ENCODE measurements at regions of chr3 and their contacts with region 1.

Region 1: DNA sequence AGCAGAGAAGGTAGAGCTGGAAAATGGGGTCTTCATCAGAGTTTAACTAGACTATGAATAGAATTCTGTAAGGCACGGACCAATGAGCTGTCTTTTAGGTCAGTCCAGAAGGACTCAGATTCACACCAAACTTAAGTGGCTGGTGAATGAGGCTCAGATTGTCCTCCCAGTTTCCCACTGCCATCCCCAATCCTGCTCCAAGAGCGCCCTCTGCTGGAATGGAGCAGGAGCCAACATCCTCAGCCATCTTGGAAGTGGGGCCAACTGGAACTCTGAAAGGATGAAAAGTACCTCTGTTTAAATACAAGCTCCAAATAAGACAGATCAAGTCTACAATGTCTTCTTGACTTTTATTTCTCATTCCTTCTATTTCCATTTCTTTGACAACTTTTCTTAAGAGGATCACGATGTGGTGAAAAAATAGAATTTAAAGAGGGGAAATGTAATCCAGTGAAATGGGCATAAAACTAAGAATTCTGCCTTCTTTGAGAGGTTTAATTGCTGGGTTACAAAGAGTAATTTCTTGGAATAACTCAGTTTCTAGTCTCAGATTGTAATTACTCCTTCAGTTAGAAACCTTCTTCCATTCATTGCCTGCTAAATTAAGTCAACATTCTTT is 217.1 kb upstream of the TPRG1 start:
- DNase-seq: peak; percentile 84
- H3K4me3 ChIP-seq: no peak overlapping the region
- H3K27ac ChIP-seq: no peak overlapping the region
- H3K4me1 ChIP-seq: peaks cover 21% of the 10 kb centered on the region
- H3K27me3 ChIP-seq: no peaks in the 10 kb centered on the region
- CTCF ChIP-seq: peak; percentile 84 to 95
- POLR2A ChIP-seq: no peak

Region 2: DNA sequence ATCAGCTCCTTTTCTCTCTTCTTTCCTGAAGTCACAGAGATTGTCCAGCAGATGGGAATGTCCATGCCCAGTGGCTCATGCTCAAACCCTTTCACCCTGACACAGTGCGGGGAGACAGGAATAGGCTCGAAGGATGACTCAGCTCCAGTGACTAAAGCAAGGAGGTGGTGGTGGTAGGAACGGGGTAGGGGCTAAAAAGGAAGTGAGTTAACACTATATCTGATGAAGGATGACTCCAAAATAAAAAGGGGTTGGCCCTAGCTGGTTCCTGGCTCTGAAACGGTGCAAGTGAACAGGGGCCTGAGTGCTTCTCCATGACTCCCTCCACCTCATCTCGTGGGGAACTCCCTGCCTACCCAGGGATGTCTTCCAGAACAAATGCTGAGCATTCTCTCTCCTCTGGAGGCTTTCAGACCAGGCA is 968.2 kb before region 1 on chr3:
- CTCF ChIA-PET with region 1: no interaction called
- POLR2A ChIA-PET with region 1: no interaction called
- dilution Hi-C with region 1: no loop called
- intact Hi-C with region 1: loop called (anchors 5 kb)
- DNase-seq: peak; percentile 84
- H3K4me3 ChIP-seq: no peak overlapping the region
- H3K27ac ChIP-seq: peak overlapping the region; percentile 11
- H3K4me1 ChIP-seq: peaks cover 15% of the 10 kb centered on the region
- H3K27me3 ChIP-seq: no peaks in the 10 kb centered on the region
- CTCF ChIP-seq: no peak
- POLR2A ChIP-seq: no peak

Region 3: GRCh38 chr3:188270423-188270972 is 684.2 kb before region 1 on chr3:
- CTCF ChIA-PET with region 1: interaction called, 11 read pairs
- POLR2A ChIA-PET with region 1: no interaction called
- dilution Hi-C with region 1: no loop called
- intact Hi-C with region 1: no loop called
- DNase-seq: peak; percentile 84
- H3K4me3 ChIP-seq: no peak overlapping the region
- H3K27ac ChIP-seq: peak overlapping the region; percentile 70
- H3K4me1 ChIP-seq: peaks cover 69% of the 10 kb centered on the region
- H3K27me3 ChIP-seq: no peaks in the 10 kb centered on the region
- CTCF ChIP-seq: no peak
- POLR2A ChIP-seq: no peak

Region 4: GRCh38 chr3:188546835-188547670 is 407.6 kb before region 1 on chr3:
- CTCF ChIA-PET with region 1: interaction called, 12 read pairs
- POLR2A ChIA-PET with region 1: no interaction called
- dilution Hi-C with region 1: no loop called
- intact Hi-C with region 1: loop called (anchors 5 kb)
- DNase-seq: peak; percentile 87
- H3K4me3 ChIP-seq: peak overlapping the region in 1 of 3 experiments; percentile 22
- H3K27ac ChIP-seq: peak overlapping the region; percentile 86
- H3K4me1 ChIP-seq: peaks cover 34% of the 10 kb centered on the region
- H3K27me3 ChIP-seq: no peaks in the 10 kb centered on the region
- CTCF ChIP-seq: no peak
- POLR2A ChIP-seq: no peak

Region 5: DNA sequence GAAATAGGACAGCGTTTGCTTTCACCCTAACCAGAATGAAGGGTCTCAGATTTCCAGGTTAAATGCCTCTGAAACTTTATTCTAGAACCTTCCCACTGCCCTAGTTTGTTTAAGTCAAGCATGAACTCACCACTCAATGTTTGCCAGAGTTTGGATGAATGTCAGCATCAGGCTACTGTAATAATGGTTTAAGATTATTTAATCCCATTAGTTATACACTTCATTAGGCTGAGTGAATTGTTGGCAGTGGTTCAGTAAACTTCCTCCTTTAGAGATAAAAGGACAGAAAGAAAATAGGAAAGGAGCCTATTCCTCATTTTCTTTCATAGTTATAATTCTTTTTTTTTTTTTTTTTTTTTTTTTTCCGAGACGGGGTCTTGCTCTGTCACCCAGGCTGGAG is 184.9 kb before region 1 on chr3:
- CTCF ChIA-PET with region 1: interaction called, 3 read pairs
- POLR2A ChIA-PET with region 1: no interaction called
- dilution Hi-C with region 1: no loop called
- intact Hi-C with region 1: loop called (anchors 5 kb)
- DNase-seq: no peak
- H3K4me3 ChIP-seq: no peak overlapping the region
- H3K27ac ChIP-seq: no peak overlapping the region
- H3K4me1 ChIP-seq: no peaks in the 10 kb centered on the region
- H3K27me3 ChIP-seq: no peaks in the 10 kb centered on the region
- CTCF ChIP-seq: no peak
- POLR2A ChIP-seq: no peak

Region 6: GRCh38 chr3:188974856-188975599 is 20.3 kb after region 1 on chr3:
- CTCF ChIA-PET with region 1: interaction called, 11 read pairs
- POLR2A ChIA-PET with region 1: interaction called, 4 read pairs
- dilution Hi-C with region 1: no loop called
- intact Hi-C with region 1: no loop called
- DNase-seq: no peak
- H3K4me3 ChIP-seq: no peak overlapping the region
- H3K27ac ChIP-seq: no peak overlapping the region
- H3K4me1 ChIP-seq: no peaks in the 10 kb centered on the region
- H3K27me3 ChIP-seq: peaks cover 10 to 20% of the 10 kb centered on the region in 2 experiments
- CTCF ChIP-seq: no peak
- POLR2A ChIP-seq: no peak

Region 7: GRCh38 chr3:189108067-189108466 is 153.4 kb after region 1 on chr3:
- CTCF ChIA-PET with region 1: no interaction called
- POLR2A ChIA-PET with region 1: no interaction called
- dilution Hi-C with region 1: no loop called
- intact Hi-C with region 1: no loop called
- DNase-seq: no peak
- H3K4me3 ChIP-seq: no peak overlapping the region
- H3K27ac ChIP-seq: no peak overlapping the region
- H3K4me1 ChIP-seq: no peaks in the 10 kb centered on the region
- H3K27me3 ChIP-seq: peaks cover 0 to 4% of the 10 kb centered on the region in 2 experiments
- CTCF ChIP-seq: no peak
- POLR2A ChIP-seq: no peak

Region 8: GRCh38 chr3:189365609-189366564 is 411.2 kb after region 1 on chr3:
- CTCF ChIA-PET with region 1: no interaction called
- POLR2A ChIA-PET with region 1: no interaction called
- dilution Hi-C with region 1: no loop called
- intact Hi-C with region 1: no loop called
- DNase-seq: no peak
- H3K4me3 ChIP-seq: no peak overlapping the region
- H3K27ac ChIP-seq: no peak overlapping the region
- H3K4me1 ChIP-seq: no peaks in the 10 kb centered on the region
- H3K27me3 ChIP-seq: no peaks in the 10 kb centered on the region
- CTCF ChIP-seq: no peak
- POLR2A ChIP-seq: no peak

Region 9: DNA sequence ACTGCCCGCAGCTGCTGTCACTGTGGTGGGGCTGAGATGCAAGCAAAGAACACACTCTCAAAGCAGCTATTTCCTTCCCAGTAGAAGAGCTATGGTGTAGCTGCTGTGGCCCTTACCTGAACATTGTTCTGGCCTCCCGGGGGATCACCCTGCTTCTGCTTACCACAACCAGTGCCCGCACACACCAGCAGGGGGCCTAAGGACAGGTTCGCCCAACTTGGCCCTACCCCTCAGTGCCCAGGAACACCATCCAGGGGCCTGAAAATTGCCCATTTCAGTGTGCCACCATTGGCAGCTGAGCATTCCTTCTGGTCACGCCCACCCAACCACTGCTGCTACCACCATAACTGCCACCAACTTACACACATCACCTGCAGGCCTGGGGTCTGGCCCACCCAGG is 789.5 kb after region 1 on chr3:
- CTCF ChIA-PET with region 1: no interaction called
- POLR2A ChIA-PET with region 1: no interaction called
- dilution Hi-C with region 1: no loop called
- intact Hi-C with region 1: no loop called
- DNase-seq: no peak
- H3K4me3 ChIP-seq: no peak overlapping the region
- H3K27ac ChIP-seq: no peak overlapping the region
- H3K4me1 ChIP-seq: peaks cover 5% of the 10 kb centered on the region
- H3K27me3 ChIP-seq: no peaks in the 10 kb centered on the region
- CTCF ChIP-seq: no peak
- POLR2A ChIP-seq: no peak

Measured in endothelial cell of umbilical vein (primary cell).